Panc1 (cell line): ENCODE measurements at regions of chr19 and their contacts with region 1.

Region 1: DNA sequence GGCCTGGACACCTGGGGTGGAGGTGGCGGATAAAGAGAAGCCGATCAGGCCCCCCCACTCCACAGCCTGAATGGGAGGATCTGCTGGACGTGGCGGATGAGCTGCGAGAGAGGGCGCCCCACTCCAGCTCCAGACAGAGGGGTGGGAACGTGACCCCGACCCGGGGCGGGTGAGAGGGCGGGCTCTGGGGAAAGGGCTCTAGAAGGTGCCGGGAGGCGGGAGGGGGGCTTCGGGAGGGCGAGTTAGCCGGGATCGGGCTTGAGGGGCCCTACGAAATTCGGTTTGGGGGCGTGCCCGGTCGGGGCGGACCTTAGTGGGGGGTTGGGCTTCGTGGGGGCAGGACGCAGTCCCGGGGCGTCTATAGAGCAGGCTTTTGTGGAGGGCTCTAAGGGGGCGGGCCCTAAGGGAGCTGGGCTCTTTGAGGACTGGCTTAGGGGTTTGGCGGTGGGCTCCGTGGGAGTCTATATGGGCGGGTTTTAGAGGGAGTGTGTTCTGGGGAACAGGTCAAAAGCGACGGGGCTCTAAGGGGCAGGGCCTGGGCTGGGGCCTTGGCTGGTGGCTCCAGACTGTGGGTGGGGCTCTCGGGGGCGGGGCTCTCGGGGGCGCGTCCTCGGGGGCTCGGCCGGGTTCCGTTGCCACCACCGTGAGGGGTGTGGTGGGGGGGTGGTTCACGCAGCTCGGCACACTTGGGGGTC is 4.1 kb upstream of the NANOS3 start:
- DNase-seq: no peak
- ATAC-seq: peak; percentile 84
- H3K4me3 ChIP-seq: peak overlapping the region; percentile 38 to 57
- H3K27ac ChIP-seq: no peak overlapping the region
- H3K4me1 ChIP-seq: peaks cover 17% of the 10 kb centered on the region
- H3K27me3 ChIP-seq: no peaks in the 10 kb centered on the region
- CTCF ChIP-seq: peak; percentile 75

Region 2: GRCh38 chr19:13621413-13621812 is 251.4 kb before region 1 on chr19:
- CTCF ChIA-PET with region 1: interaction called, 14 read pairs
- POLR2A ChIA-PET with region 1: no interaction called
- in situ Hi-C with region 1: no loop called
- intact Hi-C with region 1: no loop called
- DNase-seq: peak; percentile 87
- ATAC-seq: peak; percentile 99
- H3K4me3 ChIP-seq: no peak overlapping the region
- H3K27ac ChIP-seq: peak overlapping the region; percentile 57; the same call in 1 of the 2 replicates
- H3K4me1 ChIP-seq: peaks cover 20% of the 10 kb centered on the region
- H3K27me3 ChIP-seq: no peaks in the 10 kb centered on the region
- CTCF ChIP-seq: no peak; the same call in 1 of the 2 replicates